Thyroid gland (tissue), 4 donors: ENCODE measurements at regions of chr2 and their contacts with region 1.

Region 1: DNA sequence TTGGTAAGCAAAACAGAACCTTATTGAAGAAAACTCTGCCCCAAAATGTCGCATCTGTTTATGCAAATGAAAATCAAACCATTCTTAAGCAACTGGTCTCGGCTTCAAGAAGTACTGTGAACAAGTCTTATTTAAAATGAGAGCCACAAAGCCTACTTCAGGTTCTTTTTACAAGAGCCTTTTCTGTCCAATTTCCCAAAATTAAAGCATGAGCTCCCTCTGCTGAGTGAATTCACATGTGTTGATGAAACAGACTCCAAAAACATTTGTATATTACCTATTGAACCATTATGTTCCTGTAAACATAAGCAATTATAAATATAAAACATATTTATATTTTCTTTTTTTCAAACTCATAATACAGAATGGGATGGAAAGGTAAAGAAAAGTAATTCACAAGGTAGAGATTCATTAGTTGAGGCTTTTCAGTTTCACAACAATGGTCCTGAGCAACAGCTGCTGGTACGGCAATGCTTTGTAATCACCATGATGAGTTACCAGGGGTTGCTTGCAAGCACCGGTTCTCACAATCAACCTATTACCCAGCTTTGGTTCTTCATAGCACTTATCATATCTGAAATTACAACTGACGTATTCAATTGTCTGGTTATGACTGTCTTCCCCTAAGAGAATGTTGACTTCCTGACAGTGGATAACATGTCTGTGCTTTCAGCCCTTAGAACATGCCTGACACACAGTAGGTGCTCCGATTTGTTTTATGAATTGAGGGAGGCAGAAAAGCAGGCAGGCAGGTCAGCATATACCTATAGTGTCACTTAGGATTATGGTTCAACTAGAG is 108.4 kb upstream of the BZW1 start:
- DNase-seq: peak; percentile 5 to 6
- H3K4me3 ChIP-seq: no peak overlapping the region
- H3K27ac ChIP-seq: no peak overlapping the region
- H3K4me1 ChIP-seq: no peaks in the 10 kb centered on the region
- H3K27me3 ChIP-seq: no peaks in the 10 kb centered on the region
- CTCF ChIP-seq: peak in 5 of 6 experiments; percentile 20 to 69 (median 54)
- POLR2A ChIP-seq: no peak

Region 2: GRCh38 chr2:200585730-200586643 is 117.3 kb before region 1 on chr2 and contains the start of gene AOX1:
- intact Hi-C with region 1: loop called (anchors 10 kb)
- DNase-seq: peak; percentile 57 to 62
- H3K4me3 ChIP-seq: peak within 1 kb of the TSS; percentile 3 to 38 (median 30)
- H3K27ac ChIP-seq: peak within 1 kb of the TSS in 2 of 3 donors; percentile 26 to 66
- H3K4me1 ChIP-seq: peaks cover 0 to 4% of the 10 kb centered on the region in 2 donors
- H3K27me3 ChIP-seq: no peaks in the 10 kb centered on the region
- CTCF ChIP-seq: peak in 1 of 6 experiments; percentile 10
- POLR2A ChIP-seq: no peak
- total RNA-seq, gene AOX1: 47.2 to 144 (median 69.8) TPM